T-cell (primary cell): ENCODE measurements at regions of chr14 and their contacts with region 1.

Region 1: GRCh38 chr14:20413045-20413799 is at the start of gene TEP1:
- DNase-seq: peak; percentile 30 to 80 (median 56)
- ATAC-seq: peak; percentile 74 to 92 (median 88)
- H3K4me3 ChIP-seq: peak within 1 kb of the TSS; percentile 85 to 97
- H3K4me3 Mint-ChIP-seq: peak within 1 kb of the TSS; percentile 90 to 97 (median 95)
- H3K27ac ChIP-seq: peak within 1 kb of the TSS; percentile 88
- H3K27ac Mint-ChIP-seq: peak within 1 kb of the TSS; percentile 97 to 98
- H3K4me1 ChIP-seq: peaks cover 15 to 20% of the 10 kb centered on the region in 2 experiments
- H3K4me1 Mint-ChIP-seq: peaks cover 42 to 49% (median 48%) of the 10 kb centered on the region in 3 donors
- H3K27me3 ChIP-seq: no peaks in the 10 kb centered on the region
- H3K27me3 Mint-ChIP-seq: no peaks in the 10 kb centered on the region
- total RNA-seq, gene TEP1: 38.5 to 71.5 (median 65.5) TPM

Region 2: DNA sequence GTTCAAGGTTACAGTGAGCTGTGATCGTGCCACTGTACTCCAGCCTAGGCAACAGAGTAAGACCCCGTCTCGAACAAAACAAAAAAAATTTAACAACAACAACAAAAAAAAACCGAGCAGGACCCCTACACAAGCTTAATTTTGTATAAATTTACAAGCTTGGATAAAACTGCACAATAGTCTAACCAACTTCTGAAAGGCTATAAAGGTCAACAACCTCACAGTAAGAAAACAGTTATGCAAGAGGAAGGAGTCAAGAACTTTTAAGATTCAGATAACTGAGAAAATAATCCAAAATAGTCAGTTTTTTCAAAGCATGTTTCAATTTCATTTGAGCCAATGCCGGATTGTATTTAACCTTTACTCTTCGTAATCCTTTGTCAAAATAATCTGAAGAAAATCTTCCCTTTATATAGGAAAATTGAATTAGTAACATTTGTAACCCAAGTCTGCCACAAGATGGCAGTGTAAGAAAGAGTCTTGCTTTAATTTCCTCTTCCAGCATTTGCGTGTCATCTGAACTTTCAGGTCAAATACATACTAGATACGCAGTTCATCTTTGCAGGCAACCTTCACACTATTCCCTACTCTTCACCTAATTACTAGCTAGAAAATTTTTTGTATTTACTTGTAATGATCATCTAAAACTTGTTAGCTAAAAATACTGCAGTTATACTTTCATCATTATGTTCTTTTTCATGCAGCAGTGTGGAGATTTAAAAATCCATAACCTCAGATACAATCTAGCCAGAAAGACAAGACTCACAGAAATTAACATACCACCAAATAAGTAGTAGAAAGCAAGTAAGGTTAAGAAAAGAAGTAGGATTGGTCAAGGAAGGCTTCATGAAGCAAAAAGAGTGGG is 86.0 kb before region 1 on chr14:
- CTCF ChIA-PET with region 1: interaction called, 6 to 18 read pairs
- POLR2A ChIA-PET with region 1: no interaction called
- DNase-seq: peak in 8 of 35 experiments; percentile 9 to 84 (median 31)
- ATAC-seq: peak; percentile 46 to 72 (median 60)
- H3K4me3 ChIP-seq: no peak overlapping the region
- H3K4me3 Mint-ChIP-seq: peak overlapping the region in 1 of 3 donors; percentile 13
- H3K27ac ChIP-seq: no peak overlapping the region
- H3K27ac Mint-ChIP-seq: peak overlapping the region; percentile 70 to 79
- H3K4me1 ChIP-seq: peaks cover 0 to under 1% of the 10 kb centered on the region in 2 experiments
- H3K4me1 Mint-ChIP-seq: peaks cover 19 to 29% (median 24%) of the 10 kb centered on the region in 3 donors
- H3K27me3 ChIP-seq: no peaks in the 10 kb centered on the region
- H3K27me3 Mint-ChIP-seq: no peaks in the 10 kb centered on the region

Region 3: DNA sequence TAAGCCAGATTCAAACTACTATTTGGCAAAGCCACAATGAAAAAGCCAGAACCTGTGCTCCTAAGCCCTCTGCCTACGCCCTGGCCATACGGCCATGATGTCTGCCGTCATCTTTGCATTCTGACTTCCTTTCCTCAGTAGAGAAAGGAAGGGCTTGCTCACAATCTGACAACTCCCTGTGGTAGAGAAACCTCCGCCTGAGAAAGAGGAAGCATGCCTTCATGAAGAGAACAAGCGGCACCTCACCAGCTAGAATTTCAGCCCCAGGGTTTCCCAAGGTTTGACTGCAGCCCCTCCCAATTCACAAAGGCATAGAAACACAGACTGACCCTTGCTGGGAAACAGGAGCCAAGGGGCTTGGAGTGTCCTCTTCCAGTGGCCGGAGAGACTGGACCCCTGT is 25.6 kb before region 1 on chr14:
- CTCF ChIA-PET with region 1: no interaction called
- POLR2A ChIA-PET with region 1: interaction called in 1 of 2 experiments, 10 read pairs
- DNase-seq: peak in 1 of 35 experiments; percentile 5
- ATAC-seq: no peak
- H3K4me3 ChIP-seq: no peak overlapping the region
- H3K4me3 Mint-ChIP-seq: no peak overlapping the region
- H3K27ac ChIP-seq: no peak overlapping the region
- H3K27ac Mint-ChIP-seq: no peak overlapping the region
- H3K4me1 ChIP-seq: no peaks in the 10 kb centered on the region
- H3K4me1 Mint-ChIP-seq: no peaks in the 10 kb centered on the region
- H3K27me3 ChIP-seq: no peaks in the 10 kb centered on the region
- H3K27me3 Mint-ChIP-seq: no peaks in the 10 kb centered on the region

Region 4: GRCh38 chr14:20400965-20401593 is 12.1 kb before region 1 on chr14:
- CTCF ChIA-PET with region 1: interaction called, 5 to 9 read pairs
- POLR2A ChIA-PET with region 1: interaction called, 3 to 10 read pairs
- DNase-seq: no peak
- ATAC-seq: peak in 3 of 4 experiments; percentile 86 to 97 (median 92)
- H3K4me3 ChIP-seq: no peak overlapping the region
- H3K4me3 Mint-ChIP-seq: peak overlapping the region in 2 of 3 donors; percentile 37 to 64
- H3K27ac ChIP-seq: no peak overlapping the region
- H3K27ac Mint-ChIP-seq: peak overlapping the region; percentile 73 to 85
- H3K4me1 ChIP-seq: peaks cover 0 to 5% of the 10 kb centered on the region in 2 experiments
- H3K4me1 Mint-ChIP-seq: peaks cover 11 to 26% (median 23%) of the 10 kb centered on the region in 3 donors
- H3K27me3 ChIP-seq: no peaks in the 10 kb centered on the region
- H3K27me3 Mint-ChIP-seq: no peaks in the 10 kb centered on the region

Region 5: GRCh38 chr14:20446889-20447288 is 33.7 kb after region 1 on chr14:
- CTCF ChIA-PET with region 1: interaction called, 3 to 11 read pairs
- POLR2A ChIA-PET with region 1: interaction called in 1 of 2 experiments, 10 read pairs
- DNase-seq: no peak
- ATAC-seq: no peak
- H3K4me3 ChIP-seq: no peak overlapping the region
- H3K4me3 Mint-ChIP-seq: no peak overlapping the region
- H3K27ac ChIP-seq: no peak overlapping the region
- H3K27ac Mint-ChIP-seq: peak overlapping the region; percentile 16 to 44
- H3K4me1 ChIP-seq: peaks cover 1% of the 10 kb centered on the region in 2 experiments
- H3K4me1 Mint-ChIP-seq: peaks cover 3 to 9% (median 3%) of the 10 kb centered on the region in 3 donors
- H3K27me3 ChIP-seq: no peaks in the 10 kb centered on the region
- H3K27me3 Mint-ChIP-seq: no peaks in the 10 kb centered on the region

Region 6: DNA sequence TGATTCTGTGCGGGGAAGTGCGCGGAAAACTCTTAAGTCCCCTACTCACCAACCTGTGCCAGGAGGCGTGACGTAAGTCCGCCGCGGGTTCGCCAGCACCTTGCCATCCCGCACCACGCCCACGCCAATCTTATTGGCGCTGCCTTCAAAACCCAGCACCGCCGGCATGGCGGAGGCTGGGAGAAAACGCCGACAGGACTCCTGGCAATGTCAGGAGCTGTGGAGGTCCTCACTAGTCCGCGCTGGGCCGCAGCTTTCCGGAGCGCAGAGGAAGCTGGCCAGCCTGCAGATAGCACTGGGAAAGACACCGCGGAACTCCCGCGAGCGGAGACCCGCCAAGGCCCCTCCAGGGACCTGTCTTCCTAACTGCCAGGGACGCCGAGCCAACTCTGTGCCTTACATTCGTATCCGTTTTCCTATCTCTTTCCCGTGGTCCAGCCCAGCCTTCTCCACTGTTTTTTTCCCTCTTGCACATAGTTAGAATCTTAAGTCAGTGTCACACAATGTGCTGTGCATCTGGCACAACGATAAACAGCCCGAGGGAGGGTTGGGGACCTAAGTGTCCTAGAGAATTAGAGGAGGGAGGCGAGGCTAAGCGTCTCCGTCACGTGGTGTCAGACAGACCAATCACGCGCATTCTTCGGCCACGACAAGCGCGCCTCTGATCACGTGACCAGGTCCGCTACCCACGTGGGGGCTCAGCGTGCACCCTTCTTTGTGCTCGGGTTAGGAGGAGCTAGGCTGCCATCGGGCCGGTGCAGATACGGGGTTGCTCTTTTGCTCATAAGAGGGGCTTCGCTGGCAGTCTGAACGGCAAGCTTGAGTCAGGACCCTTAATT is 41.5 kb after region 1 on chr14 and contains the starts of genes APEX1 and OSGEP:
- CTCF ChIA-PET with region 1: interaction called, 4 to 11 read pairs
- POLR2A ChIA-PET with region 1: interaction called, 4 to 5 read pairs
- DNase-seq: peak; percentile 92 to 100 (median 98)
- ATAC-seq: peak; percentile 81 to 89 (median 86)
- H3K4me3 ChIP-seq: peak within 1 kb of the TSS; percentile 87 to 88
- H3K4me3 Mint-ChIP-seq: peak within 1 kb of the TSS in 1 of 3 donors; percentile 47
- H3K27ac ChIP-seq: peak within 1 kb of the TSS; percentile 88
- H3K27ac Mint-ChIP-seq: no peak within 1 kb of the TSS
- H3K4me1 ChIP-seq: peaks cover 21 to 23% of the 10 kb centered on the region in 2 experiments
- H3K4me1 Mint-ChIP-seq: peaks cover 18 to 30% (median 23%) of the 10 kb centered on the region in 3 donors
- H3K27me3 ChIP-seq: no peaks in the 10 kb centered on the region
- H3K27me3 Mint-ChIP-seq: no peaks in the 10 kb centered on the region
- total RNA-seq, gene APEX1: 92.9 to 142 (median 120) TPM
- total RNA-seq, gene OSGEP: 56.4 to 80.2 (median 61.5) TPM

Region 7: GRCh38 chr14:20461274-20462001 is 48.2 kb after region 1 on chr14 and contains the start of gene PIP4P1:
- CTCF ChIA-PET with region 1: interaction called in 1 of 2 experiments, 11 read pairs
- POLR2A ChIA-PET with region 1: interaction called, 7 to 9 read pairs
- DNase-seq: peak; percentile 91 to 100 (median 98)
- ATAC-seq: peak; percentile 88 to 92 (median 90)
- H3K4me3 ChIP-seq: peak within 1 kb of the TSS; percentile 68 to 76
- H3K4me3 Mint-ChIP-seq: peak within 1 kb of the TSS; percentile 84 to 92 (median 88)
- H3K27ac ChIP-seq: peak within 1 kb of the TSS; percentile 90
- H3K27ac Mint-ChIP-seq: peak within 1 kb of the TSS; percentile 94
- H3K4me1 ChIP-seq: peaks cover 11 to 27% of the 10 kb centered on the region in 2 experiments
- H3K4me1 Mint-ChIP-seq: peaks cover 24 to 40% (median 31%) of the 10 kb centered on the region in 3 donors
- H3K27me3 ChIP-seq: no peaks in the 10 kb centered on the region
- H3K27me3 Mint-ChIP-seq: no peaks in the 10 kb centered on the region
- total RNA-seq, gene PIP4P1: 54.2 to 72.8 (median 57.5) TPM

Region 8: DNA sequence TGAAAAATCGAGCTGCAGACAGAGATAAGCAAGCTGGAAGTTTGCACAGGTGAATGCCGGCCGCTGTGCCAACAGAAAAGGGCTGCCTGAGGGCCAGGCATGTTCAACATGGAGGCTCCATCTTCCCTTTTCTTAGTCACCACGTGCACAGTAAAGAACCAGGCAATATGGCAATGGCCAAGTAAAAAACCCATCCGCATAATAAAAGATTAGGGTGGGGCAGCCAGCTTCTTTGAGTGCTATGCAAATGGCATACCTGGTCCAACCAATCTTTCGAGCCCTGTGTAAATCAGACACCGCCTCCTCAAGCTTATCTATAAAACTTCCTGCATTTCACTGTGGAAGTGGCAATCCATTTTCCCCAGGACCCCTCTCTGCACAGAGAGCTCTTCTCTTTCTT is 72.7 kb after region 1 on chr14:
- CTCF ChIA-PET with region 1: no interaction called
- POLR2A ChIA-PET with region 1: no interaction called
- DNase-seq: no peak
- ATAC-seq: no peak
- H3K4me3 ChIP-seq: no peak overlapping the region
- H3K4me3 Mint-ChIP-seq: no peak overlapping the region
- H3K27ac ChIP-seq: no peak overlapping the region
- H3K27ac Mint-ChIP-seq: peak overlapping the region in 1 of 2 donors; percentile 70
- H3K4me1 ChIP-seq: peaks cover 41 to 44% of the 10 kb centered on the region in 2 experiments
- H3K4me1 Mint-ChIP-seq: peaks cover 74 to 93% (median 84%) of the 10 kb centered on the region in 3 donors
- H3K27me3 ChIP-seq: no peaks in the 10 kb centered on the region
- H3K27me3 Mint-ChIP-seq: no peaks in the 10 kb centered on the region